Testis (tissue), 5 donors: ENCODE measurements at regions of chr7 and their contacts with region 1.

Region 1: DNA sequence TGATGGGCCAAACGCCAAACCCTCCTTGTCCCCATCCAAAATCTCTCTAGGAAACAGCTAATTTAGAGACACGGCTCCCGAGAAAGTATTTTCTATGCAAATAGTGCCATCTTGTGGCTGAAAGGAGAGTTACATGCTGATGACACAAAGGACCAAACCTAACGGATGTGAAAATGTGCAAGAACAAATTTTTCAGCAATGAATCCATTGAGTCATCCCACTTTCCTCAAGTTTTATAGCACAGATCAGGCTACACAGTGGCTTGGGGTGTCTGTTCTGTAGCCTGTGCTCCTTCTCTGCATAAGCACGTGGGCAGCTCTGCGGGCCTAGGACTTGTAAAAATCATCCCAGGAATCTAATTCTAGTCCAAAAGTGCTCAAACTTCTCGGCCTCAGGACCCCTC is 154.8 kb upstream of the PRR15 start:
- DNase-seq: peak; percentile 82
- H3K4me3 ChIP-seq: no peak overlapping the region
- H3K27ac ChIP-seq: no peak overlapping the region
- H3K4me1 ChIP-seq: peaks cover 10% of the 10 kb centered on the region
- H3K27me3 ChIP-seq: no peaks in the 10 kb centered on the region
- CTCF ChIP-seq: peak; percentile 90 to 94 (median 94)
- POLR2A ChIP-seq: no peak

Region 2: GRCh38 chr7:28921822-28922221 is 487.0 kb before region 1 on chr7:
- intact Hi-C with region 1: loop called (anchors 5 kb)
- DNase-seq: peak; percentile 59
- H3K4me3 ChIP-seq: no peak overlapping the region
- H3K27ac ChIP-seq: no peak overlapping the region
- H3K4me1 ChIP-seq: peaks cover 4% of the 10 kb centered on the region
- H3K27me3 ChIP-seq: no peaks in the 10 kb centered on the region
- CTCF ChIP-seq: peak; percentile 92 to 93 (median 93)
- POLR2A ChIP-seq: no peak